ENCODE measurements at regions of chr18 and their contacts with region 1.

Region 1: GRCh38 chr18:74196220-74197119 is 48.1 kb downstream of the TIMM21 start:
- DNase-seq: peak in 1 of 2 donors; percentile 87
- ATAC-seq: peak; percentile 82 to 98 (median 97)
- H3K4me3 ChIP-seq: no peak overlapping the region
- H3K4me3 Mint-ChIP-seq: peak overlapping the region; percentile 79
- H3K27ac ChIP-seq: no peak overlapping the region
- H3K27ac Mint-ChIP-seq: peak overlapping the region; percentile 12 to 52
- H3K4me1 ChIP-seq: no peaks in the 10 kb centered on the region
- H3K4me1 Mint-ChIP-seq: peaks cover 6 to 8% of the 10 kb centered on the region in 2 donors
- H3K27me3 ChIP-seq: no peaks in the 10 kb centered on the region
- H3K27me3 Mint-ChIP-seq: peaks cover 0 to 3% of the 10 kb centered on the region in 2 donors
- CTCF ChIP-seq: peak; percentile 93

Region 2: GRCh38 chr18:73549236-73549635 is 647.2 kb before region 1 on chr18:
- intact Hi-C with region 1: no loop called
- DNase-seq: no peak
- ATAC-seq: no peak
- H3K4me3 ChIP-seq: no peak overlapping the region
- H3K4me3 Mint-ChIP-seq: no peak overlapping the region
- H3K27ac ChIP-seq: no peak overlapping the region
- H3K27ac Mint-ChIP-seq: no peak overlapping the region
- H3K4me1 ChIP-seq: no peaks in the 10 kb centered on the region
- H3K4me1 Mint-ChIP-seq: no peaks in the 10 kb centered on the region
- H3K27me3 ChIP-seq: no peaks in the 10 kb centered on the region
- H3K27me3 Mint-ChIP-seq: no peaks in the 10 kb centered on the region
- CTCF ChIP-seq: no peak

Region 3: GRCh38 chr18:74139888-74140287 is 56.6 kb before region 1 on chr18:
- intact Hi-C with region 1: no loop called
- DNase-seq: no peak
- ATAC-seq: no peak
- H3K4me3 ChIP-seq: no peak overlapping the region
- H3K4me3 Mint-ChIP-seq: no peak overlapping the region
- H3K27ac ChIP-seq: no peak overlapping the region
- H3K27ac Mint-ChIP-seq: no peak overlapping the region
- H3K4me1 ChIP-seq: no peaks in the 10 kb centered on the region
- H3K4me1 Mint-ChIP-seq: no peaks in the 10 kb centered on the region
- H3K27me3 ChIP-seq: no peaks in the 10 kb centered on the region
- H3K27me3 Mint-ChIP-seq: peaks cover 28 to 54% of the 10 kb centered on the region in 2 donors
- CTCF ChIP-seq: no peak

Region 4: DNA sequence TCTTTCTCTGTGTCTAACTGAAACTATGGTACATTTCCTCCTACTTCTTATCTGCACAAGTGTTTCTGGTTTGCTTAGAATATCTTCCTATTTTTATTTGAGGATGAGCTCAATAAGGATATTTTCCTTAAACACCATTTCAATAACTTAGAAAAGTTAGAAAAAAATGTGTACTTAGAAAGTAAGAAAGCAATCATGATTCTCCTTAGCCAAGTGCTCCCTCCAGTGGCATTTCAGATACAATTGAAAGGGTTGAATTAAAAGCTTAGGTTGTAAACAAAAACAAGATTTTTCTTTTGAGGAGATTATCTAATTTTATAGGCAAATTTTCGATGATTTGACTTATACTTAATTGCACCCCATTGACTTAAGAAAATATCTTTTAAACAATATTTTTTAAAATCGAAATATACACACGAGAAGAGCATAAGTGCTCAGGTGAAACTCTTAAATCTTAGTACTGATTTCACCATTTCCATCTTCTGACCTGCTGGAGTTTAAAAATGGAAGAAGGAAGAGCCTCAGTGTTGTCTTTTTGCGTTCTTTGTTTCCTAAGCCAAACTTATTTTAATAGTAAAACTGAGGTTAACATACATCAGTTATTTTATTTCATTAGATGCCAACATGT is 146.1 kb after region 1 on chr18:
- intact Hi-C with region 1: loop called (anchors 1 kb)
- DNase-seq: peak in 1 of 2 donors; percentile 76
- ATAC-seq: no peak
- H3K4me3 ChIP-seq: no peak overlapping the region
- H3K4me3 Mint-ChIP-seq: no peak overlapping the region
- H3K27ac ChIP-seq: no peak overlapping the region
- H3K27ac Mint-ChIP-seq: no peak overlapping the region
- H3K4me1 ChIP-seq: no peaks in the 10 kb centered on the region
- H3K4me1 Mint-ChIP-seq: no peaks in the 10 kb centered on the region
- H3K27me3 ChIP-seq: peaks cover 5% of the 10 kb centered on the region
- H3K27me3 Mint-ChIP-seq: peaks cover 10 to 32% of the 10 kb centered on the region in 2 donors
- CTCF ChIP-seq: peak; percentile 32

Region 5: GRCh38 chr18:74994502-74995419 is 798.3 kb after region 1 on chr18:
- intact Hi-C with region 1: no loop called
- DNase-seq: peak; percentile 41 to 64
- ATAC-seq: peak; percentile 70 to 85 (median 80)
- H3K4me3 ChIP-seq: peak overlapping the region; percentile 33
- H3K4me3 Mint-ChIP-seq: peak overlapping the region; percentile 84
- H3K27ac ChIP-seq: peak overlapping the region; percentile 84
- H3K27ac Mint-ChIP-seq: peak overlapping the region; percentile 86 to 95
- H3K4me1 ChIP-seq: peaks cover 29% of the 10 kb centered on the region
- H3K4me1 Mint-ChIP-seq: peaks cover 60 to 70% of the 10 kb centered on the region in 2 donors
- H3K27me3 ChIP-seq: no peaks in the 10 kb centered on the region
- H3K27me3 Mint-ChIP-seq: no peaks in the 10 kb centered on the region
- CTCF ChIP-seq: no peak